ENCODE measurements at regions of chr7 and their contacts with region 1.

Region 1: GRCh38 chr7:87152107-87152844 is at the start of gene DMTF1:
- DNase-seq: peak; percentile 92 to 99 (median 94)
- ATAC-seq: peak; percentile 88
- H3K4me3 ChIP-seq: peak within 1 kb of the TSS; percentile 85
- H3K27ac ChIP-seq: peak within 1 kb of the TSS; percentile 98
- H3K4me1 ChIP-seq: peaks cover 3 to 24% of the 10 kb centered on the region in 2 experiments; a peak in 2 of 5 replicates
- H3K27me3 ChIP-seq: no peaks in the 10 kb centered on the region
- CTCF ChIP-seq: 0 out of 6 replicates have a peak, but pooled peaks of 2 of the 3 experiments have one; percentile 0 to 14
- EP300 ChIP-seq: peak; percentile 69
- POLR2A ChIP-seq: peak; percentile 96
- RAD21 ChIP-seq: no peak
- polyA plus RNA-seq, gene DMTF1: 25.7 to 52.4 TPM

Region 2: GRCh38 chr7:86914551-86914950 is 237.7 kb before region 1 on chr7:
- CTCF ChIA-PET with region 1: interaction called, 14 read pairs
- POLR2A ChIA-PET with region 1: interaction called, 4 read pairs
- in situ Hi-C with region 1: no loop called
- intact Hi-C with region 1: loop called (anchors 1 kb)
- DNase-seq: peak; percentile 34 to 47 (median 36)
- ATAC-seq: peak; percentile 69
- H3K4me3 ChIP-seq: no peak overlapping the region
- H3K27ac ChIP-seq: no peak overlapping the region
- H3K4me1 ChIP-seq: no peaks in the 10 kb centered on the region
- H3K27me3 ChIP-seq: no peaks in the 10 kb centered on the region
- CTCF ChIP-seq: peak; percentile 45 to 69 (median 50); a peak in 4 of 6 replicates
- EP300 ChIP-seq: no peak
- POLR2A ChIP-seq: no peak
- RAD21 ChIP-seq: peak; percentile 59 to 68

Region 3: GRCh38 chr7:86939197-86939814 is 213.0 kb before region 1 on chr7:
- CTCF ChIA-PET with region 1: interaction called, 20 read pairs
- POLR2A ChIA-PET with region 1: interaction called, 4 read pairs
- in situ Hi-C with region 1: loop called (anchors 5 kb)
- intact Hi-C with region 1: loop called (anchors 1 kb)
- DNase-seq: peak; percentile 33 to 82 (median 42)
- ATAC-seq: peak; percentile 87
- H3K4me3 ChIP-seq: no peak overlapping the region
- H3K27ac ChIP-seq: no peak overlapping the region
- H3K4me1 ChIP-seq: peaks cover 0 to 9% of the 10 kb centered on the region in 2 experiments; a peak in 2 of 5 replicates
- H3K27me3 ChIP-seq: no peaks in the 10 kb centered on the region
- CTCF ChIP-seq: peak; percentile 59 to 83 (median 78); a peak in 5 of 6 replicates
- EP300 ChIP-seq: no peak
- POLR2A ChIP-seq: no peak
- RAD21 ChIP-seq: peak; percentile 87 to 88

Region 4: GRCh38 chr7:87038993-87039716 is 113.1 kb before region 1 on chr7:
- CTCF ChIA-PET with region 1: no interaction called
- POLR2A ChIA-PET with region 1: no interaction called
- in situ Hi-C with region 1: no loop called
- intact Hi-C with region 1: loop called (anchors 1 kb)
- DNase-seq: peak in 1 of 4 experiments; percentile 21
- ATAC-seq: peak; percentile 79
- H3K4me3 ChIP-seq: peak overlapping the region; percentile 52
- H3K27ac ChIP-seq: peak overlapping the region; percentile 61; the same call in 2 of the 3 replicates
- H3K4me1 ChIP-seq: peaks cover 0 to 15% of the 10 kb centered on the region in 2 experiments; a peak in 3 of 5 replicates
- H3K27me3 ChIP-seq: no peaks in the 10 kb centered on the region
- CTCF ChIP-seq: no peak
- EP300 ChIP-seq: no peak
- POLR2A ChIP-seq: no peak
- RAD21 ChIP-seq: no peak

Region 5: DNA sequence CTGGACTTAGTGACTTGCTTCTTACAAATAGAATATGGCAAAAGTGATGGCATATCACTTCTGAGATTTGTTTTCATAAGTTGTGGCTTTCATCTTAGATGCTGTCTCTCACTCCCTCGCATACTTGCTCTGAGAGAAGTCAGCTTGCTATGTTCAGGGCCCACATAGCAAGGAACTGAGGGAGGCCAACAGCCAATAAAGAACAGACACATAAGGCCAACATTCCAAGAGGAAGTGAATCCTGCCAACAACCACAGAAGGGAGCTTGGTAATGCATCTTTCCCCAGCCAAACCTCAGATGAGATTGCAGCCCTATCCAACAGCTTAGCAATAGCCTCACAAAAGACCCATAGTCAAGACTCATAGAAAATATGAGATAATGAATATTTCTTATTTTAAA is 39.2 kb before region 1 on chr7:
- CTCF ChIA-PET with region 1: no interaction called
- POLR2A ChIA-PET with region 1: no interaction called
- in situ Hi-C with region 1: no loop called
- intact Hi-C with region 1: no loop called
- DNase-seq: no peak
- ATAC-seq: no peak
- H3K4me3 ChIP-seq: no peak overlapping the region
- H3K27ac ChIP-seq: no peak overlapping the region
- H3K4me1 ChIP-seq: peaks cover 7 to 27% of the 10 kb centered on the region in 2 experiments
- H3K27me3 ChIP-seq: no peaks in the 10 kb centered on the region
- CTCF ChIP-seq: no peak
- EP300 ChIP-seq: no peak
- POLR2A ChIP-seq: no peak
- RAD21 ChIP-seq: no peak

Region 6: DNA sequence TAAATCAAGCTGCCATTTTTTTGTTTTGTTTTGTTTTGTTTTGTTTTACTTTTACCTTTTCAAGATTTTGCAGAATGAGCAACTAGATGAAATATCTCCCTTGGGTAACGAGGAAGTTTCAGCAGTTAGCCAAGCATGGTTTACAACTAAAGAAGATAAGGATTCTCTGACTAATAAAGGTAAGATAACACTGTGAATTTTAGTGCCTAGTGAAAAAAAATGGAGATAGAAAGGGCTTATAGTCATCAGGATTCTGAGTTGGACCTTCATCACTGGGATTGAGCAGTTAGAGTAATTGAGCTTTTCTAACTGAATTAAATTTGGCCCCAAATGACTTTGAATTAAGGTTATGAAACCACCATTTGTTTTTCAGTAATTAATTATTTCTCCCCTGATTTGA is 21.2 kb after region 1 on chr7:
- CTCF ChIA-PET with region 1: no interaction called
- POLR2A ChIA-PET with region 1: interaction called, 59 read pairs
- in situ Hi-C with region 1: no loop called
- intact Hi-C with region 1: no loop called
- DNase-seq: no peak
- ATAC-seq: no peak
- H3K4me3 ChIP-seq: no peak overlapping the region
- H3K27ac ChIP-seq: no peak overlapping the region
- H3K4me1 ChIP-seq: no peaks in the 10 kb centered on the region
- H3K27me3 ChIP-seq: no peaks in the 10 kb centered on the region
- CTCF ChIP-seq: no peak
- EP300 ChIP-seq: no peak
- POLR2A ChIP-seq: no peak
- RAD21 ChIP-seq: no peak

Region 7: GRCh38 chr7:87219545-87220025 is 67.3 kb after region 1 on chr7 and contains the start of gene TMEM243:
- CTCF ChIA-PET with region 1: no interaction called
- POLR2A ChIA-PET with region 1: interaction called, 4 read pairs
- in situ Hi-C with region 1: no loop called
- intact Hi-C with region 1: loop called (anchors 2 kb)
- DNase-seq: peak; percentile 62 to 73 (median 68)
- ATAC-seq: peak; percentile 83
- H3K4me3 ChIP-seq: peak within 1 kb of the TSS; percentile 61
- H3K27ac ChIP-seq: peak within 1 kb of the TSS; percentile 9; the same call in 1 of the 3 replicates
- H3K4me1 ChIP-seq: peaks cover 11 to 18% of the 10 kb centered on the region in 2 experiments; a peak in 4 of 5 replicates
- H3K27me3 ChIP-seq: peaks cover 24 to 29% of the 10 kb centered on the region in 2 experiments; a peak in 4 of 5 replicates
- CTCF ChIP-seq: peak in 2 of 3 experiments; percentile 14 to 19; a peak in 1 of 6 replicates
- EP300 ChIP-seq: no peak
- POLR2A ChIP-seq: no peak
- RAD21 ChIP-seq: no peak
- polyA plus RNA-seq, gene TMEM243: 3.9 to 4.2 TPM

Region 8: GRCh38 chr7:87345166-87345927 is 193.1 kb after region 1 on chr7 and contains the start of gene CROT:
- CTCF ChIA-PET with region 1: no interaction called
- POLR2A ChIA-PET with region 1: interaction called, 4 read pairs
- in situ Hi-C with region 1: no loop called
- intact Hi-C with region 1: loop called (anchors 5 kb)
- DNase-seq: peak; percentile 96 to 97 (median 96)
- ATAC-seq: peak; percentile 99
- H3K4me3 ChIP-seq: peak within 1 kb of the TSS; percentile 57
- H3K27ac ChIP-seq: peak within 1 kb of the TSS; percentile 38; the same call in 1 of the 3 replicates
- H3K4me1 ChIP-seq: peaks cover 7 to 8% of the 10 kb centered on the region in 2 experiments; a peak in 4 of 5 replicates
- H3K27me3 ChIP-seq: no peaks in the 10 kb centered on the region
- CTCF ChIP-seq: no peak
- EP300 ChIP-seq: no peak
- POLR2A ChIP-seq: peak; percentile 77
- RAD21 ChIP-seq: no peak
- polyA plus RNA-seq, gene CROT: 4.0 to 4.5 TPM